Ascending aorta (tissue), 2 donors: ENCODE measurements at regions of chr15 and their contacts with region 1.

Region 1: GRCh38 chr15:75178171-75179075 is 23.3 kb upstream of the C15orf39 start:
- DNase-seq: no peak
- H3K4me3 ChIP-seq: peak overlapping the region; percentile 43 to 66
- H3K27ac ChIP-seq: peak overlapping the region; percentile 78 to 79
- H3K4me1 ChIP-seq: peaks cover 16 to 45% of the 10 kb centered on the region in 2 donors
- H3K27me3 ChIP-seq: no peaks in the 10 kb centered on the region
- CTCF ChIP-seq: no peak

Region 2: GRCh38 chr15:75061272-75061671 is 117.2 kb before region 1 on chr15:
- intact Hi-C with region 1: no loop called
- DNase-seq: no peak
- H3K4me3 ChIP-seq: no peak overlapping the region
- H3K27ac ChIP-seq: no peak overlapping the region
- H3K4me1 ChIP-seq: peaks cover 0 to 23% of the 10 kb centered on the region in 2 donors
- H3K27me3 ChIP-seq: no peaks in the 10 kb centered on the region
- CTCF ChIP-seq: no peak

Region 3: DNA sequence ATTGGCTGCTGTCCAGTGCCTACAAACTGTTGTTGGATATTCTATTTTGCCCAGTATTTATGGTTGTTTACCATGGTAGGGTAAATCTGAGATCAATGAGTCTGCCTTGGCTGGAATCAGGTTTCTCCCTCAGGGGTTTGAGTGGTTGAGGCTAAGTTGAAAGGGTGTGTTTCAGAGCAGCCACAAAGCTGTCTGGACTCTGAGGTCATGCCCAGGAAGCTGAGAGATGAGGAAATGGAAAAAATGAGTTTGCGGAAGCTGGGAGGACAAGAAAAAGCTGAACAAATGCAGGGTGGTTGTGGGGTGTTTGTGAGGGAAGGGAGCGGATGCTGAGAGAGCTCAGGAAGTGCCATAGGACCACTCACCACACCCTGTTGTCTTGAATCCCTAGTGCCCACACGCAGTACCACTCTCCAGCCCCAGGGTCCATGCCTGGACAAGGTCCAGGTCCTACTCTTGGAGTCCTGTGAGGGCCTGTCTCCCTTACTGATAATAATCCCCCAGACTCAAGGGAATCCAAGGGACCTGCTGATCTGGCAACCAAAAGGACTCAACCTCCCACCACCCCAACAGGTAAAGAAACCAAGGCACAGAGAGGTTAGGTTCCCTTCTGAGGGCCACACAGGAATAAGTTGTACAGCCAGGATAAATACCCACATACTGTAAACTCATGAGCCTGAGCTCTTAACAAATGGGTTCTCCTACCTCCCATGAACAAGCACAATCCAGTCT is 73.5 kb before region 1 on chr15:
- intact Hi-C with region 1: loop called (anchors 5 kb)
- DNase-seq: no peak
- H3K4me3 ChIP-seq: no peak overlapping the region
- H3K27ac ChIP-seq: no peak overlapping the region
- H3K4me1 ChIP-seq: peaks cover 7 to 13% of the 10 kb centered on the region in 2 donors
- H3K27me3 ChIP-seq: no peaks in the 10 kb centered on the region
- CTCF ChIP-seq: no peak

Region 4: GRCh38 chr15:75153087-75153486 is 25.3 kb before region 1 on chr15:
- intact Hi-C with region 1: loop called (anchors 2 kb)
- DNase-seq: peak in 1 of 2 donors; percentile 12
- H3K4me3 ChIP-seq: no peak overlapping the region
- H3K27ac ChIP-seq: no peak overlapping the region
- H3K4me1 ChIP-seq: no peaks in the 10 kb centered on the region
- H3K27me3 ChIP-seq: no peaks in the 10 kb centered on the region
- CTCF ChIP-seq: no peak